ENCODE measurements at regions of chr16 and their contacts with region 1.

Region 1: DNA sequence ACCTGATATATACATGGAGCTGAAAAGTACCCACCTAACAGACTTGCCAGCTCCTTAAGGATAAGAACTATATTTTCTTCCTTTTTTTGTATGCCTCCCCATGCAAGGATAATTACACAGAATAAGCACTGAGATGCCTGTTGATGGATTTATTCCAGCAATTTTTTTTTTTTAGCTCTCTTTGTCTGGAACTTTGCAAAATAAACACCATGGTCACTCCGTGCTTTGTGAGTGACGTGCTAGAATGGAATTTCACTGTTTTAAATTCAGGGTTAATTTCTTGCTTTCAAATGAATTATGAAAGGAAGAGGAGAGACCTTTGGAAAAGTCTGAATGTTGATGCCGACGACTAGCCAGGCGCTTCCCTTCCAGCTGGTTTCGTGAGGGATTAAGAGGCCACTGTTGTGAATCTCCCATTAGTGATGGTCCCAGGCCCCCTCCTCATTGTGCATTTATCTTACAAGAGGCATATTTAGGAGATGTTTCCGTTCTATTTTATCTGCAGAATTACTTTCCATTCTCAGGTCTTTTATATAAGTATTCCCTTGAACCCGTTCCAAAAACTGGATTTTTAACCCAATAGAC is 529.1 kb downstream of the WWOX start:
- DNase-seq: no peak
- ATAC-seq: no peak
- H3K4me3 ChIP-seq: no peak overlapping the region
- H3K27ac ChIP-seq: peak overlapping the region; percentile 82
- H3K4me1 ChIP-seq: peaks cover 22% of the 10 kb centered on the region
- H3K27me3 ChIP-seq: no peaks in the 10 kb centered on the region
- CTCF ChIP-seq: no peak

Region 2: GRCh38 chr16:77896415-77897128 is 732.0 kb before region 1 on chr16:
- intact Hi-C with region 1: no loop called
- DNase-seq: no peak
- ATAC-seq: no peak
- H3K4me3 ChIP-seq: no peak overlapping the region
- H3K27ac ChIP-seq: no peak overlapping the region
- H3K4me1 ChIP-seq: no peaks in the 10 kb centered on the region
- H3K27me3 ChIP-seq: no peaks in the 10 kb centered on the region
- CTCF ChIP-seq: no peak

Region 3: GRCh38 chr16:78596996-78597422 is 31.5 kb before region 1 on chr16:
- intact Hi-C with region 1: loop called in 1 of 2 experiments (anchors 1 kb)
- DNase-seq: no peak
- ATAC-seq: no peak
- H3K4me3 ChIP-seq: no peak overlapping the region
- H3K27ac ChIP-seq: no peak overlapping the region
- H3K4me1 ChIP-seq: peaks cover 9% of the 10 kb centered on the region
- H3K27me3 ChIP-seq: no peaks in the 10 kb centered on the region
- CTCF ChIP-seq: no peak

Region 4: DNA sequence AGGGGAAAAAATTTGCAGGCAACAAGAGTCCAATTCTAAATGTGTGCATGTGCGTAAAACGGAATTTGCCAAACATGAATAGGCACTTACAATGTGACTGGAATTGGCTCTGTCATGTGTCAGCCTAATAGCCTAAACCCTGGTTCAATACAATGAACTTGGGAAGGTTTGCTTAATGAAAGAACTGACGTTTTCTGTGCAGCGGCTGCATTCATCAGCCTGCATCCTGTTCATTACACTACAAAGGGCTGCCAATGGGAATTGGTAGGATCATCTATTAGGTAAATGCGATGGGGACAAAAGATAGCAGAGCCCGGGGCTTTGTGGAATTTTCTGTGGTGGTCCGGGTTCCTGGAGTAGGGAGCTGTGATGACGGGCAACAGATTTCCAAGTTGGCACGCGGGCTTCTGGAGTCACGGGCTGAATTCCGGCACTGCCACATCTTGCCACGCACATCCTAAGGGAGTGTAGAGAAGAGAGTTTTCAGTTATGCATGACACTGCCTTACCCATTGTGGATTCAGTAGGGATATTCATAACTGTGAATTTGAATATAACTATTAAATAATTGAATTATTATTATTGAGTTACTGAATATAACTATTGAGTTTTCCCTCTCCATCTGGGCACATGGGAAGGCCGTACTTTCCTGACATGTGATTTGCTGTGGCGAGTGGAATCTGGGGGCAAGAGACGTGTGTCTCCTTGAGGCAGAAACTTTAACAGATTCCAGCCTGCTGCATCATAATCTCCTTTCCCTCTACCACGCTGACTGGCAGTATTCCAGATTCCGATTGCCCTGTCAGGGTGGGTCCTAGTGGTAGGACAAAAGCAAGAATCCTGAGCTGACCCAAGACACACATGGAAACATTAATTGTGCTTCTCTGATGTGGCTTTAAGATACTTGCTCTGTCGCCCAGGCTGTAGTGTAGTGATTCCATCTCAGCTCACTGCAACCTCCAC is 36.5 kb after region 1 on chr16:
- intact Hi-C with region 1: no loop called
- DNase-seq: no peak
- ATAC-seq: no peak
- H3K4me3 ChIP-seq: no peak overlapping the region
- H3K27ac ChIP-seq: no peak overlapping the region
- H3K4me1 ChIP-seq: peaks cover 4% of the 10 kb centered on the region
- H3K27me3 ChIP-seq: no peaks in the 10 kb centered on the region
- CTCF ChIP-seq: no peak

Measured in psoas muscle (tissue), 8 donors.